ENCODE measurements at regions of chr7 and their contacts with region 1.

Region 1: GRCh38 chr7:149362696-149363095 is 98.2 kb downstream of the ZNF777 start:
- DNase-seq: no peak
- ATAC-seq: no peak
- H3K4me3 ChIP-seq: no peak overlapping the region
- H3K27ac ChIP-seq: no peak overlapping the region
- H3K4me1 ChIP-seq: no peaks in the 10 kb centered on the region
- H3K27me3 ChIP-seq: peaks cover 0 to 16% of the 10 kb centered on the region in 2 experiments; a peak in 3 of 5 replicates
- CTCF ChIP-seq: no peak
- EP300 ChIP-seq: no peak
- POLR2A ChIP-seq: no peak
- RAD21 ChIP-seq: no peak

Region 2: GRCh38 chr7:149377386-149377785 is 14.7 kb after region 1 on chr7:
- CTCF ChIA-PET with region 1: no interaction called
- POLR2A ChIA-PET with region 1: interaction called, 17 read pairs
- in situ Hi-C with region 1: no loop called
- intact Hi-C with region 1: no loop called
- DNase-seq: no peak
- ATAC-seq: no peak
- H3K4me3 ChIP-seq: no peak overlapping the region
- H3K27ac ChIP-seq: no peak overlapping the region
- H3K4me1 ChIP-seq: no peaks in the 10 kb centered on the region
- H3K27me3 ChIP-seq: peaks cover 0 to 2% of the 10 kb centered on the region in 2 experiments; a peak in 2 of 5 replicates
- CTCF ChIP-seq: no peak
- EP300 ChIP-seq: no peak
- POLR2A ChIP-seq: no peak
- RAD21 ChIP-seq: no peak

Measured in K562 (cell line).